Heart left ventricle (tissue), 16 donors: ENCODE measurements at regions of chr1 and their contacts with region 1.

Region 1: GRCh38 chr1:176187001-176187400 is 20.1 kb downstream of the COP1 start:
- DNase-seq: no peak
- ATAC-seq: no peak
- H3K4me3 ChIP-seq: no peak overlapping the region
- H3K27ac ChIP-seq: no peak overlapping the region
- H3K4me1 ChIP-seq: peaks cover 0 to 45% (median 0%) of the 10 kb centered on the region in 12 donors
- H3K27me3 ChIP-seq: no peaks in the 10 kb centered on the region
- CTCF ChIP-seq: no peak
- POLR2A ChIP-seq: no peak

Region 2: DNA sequence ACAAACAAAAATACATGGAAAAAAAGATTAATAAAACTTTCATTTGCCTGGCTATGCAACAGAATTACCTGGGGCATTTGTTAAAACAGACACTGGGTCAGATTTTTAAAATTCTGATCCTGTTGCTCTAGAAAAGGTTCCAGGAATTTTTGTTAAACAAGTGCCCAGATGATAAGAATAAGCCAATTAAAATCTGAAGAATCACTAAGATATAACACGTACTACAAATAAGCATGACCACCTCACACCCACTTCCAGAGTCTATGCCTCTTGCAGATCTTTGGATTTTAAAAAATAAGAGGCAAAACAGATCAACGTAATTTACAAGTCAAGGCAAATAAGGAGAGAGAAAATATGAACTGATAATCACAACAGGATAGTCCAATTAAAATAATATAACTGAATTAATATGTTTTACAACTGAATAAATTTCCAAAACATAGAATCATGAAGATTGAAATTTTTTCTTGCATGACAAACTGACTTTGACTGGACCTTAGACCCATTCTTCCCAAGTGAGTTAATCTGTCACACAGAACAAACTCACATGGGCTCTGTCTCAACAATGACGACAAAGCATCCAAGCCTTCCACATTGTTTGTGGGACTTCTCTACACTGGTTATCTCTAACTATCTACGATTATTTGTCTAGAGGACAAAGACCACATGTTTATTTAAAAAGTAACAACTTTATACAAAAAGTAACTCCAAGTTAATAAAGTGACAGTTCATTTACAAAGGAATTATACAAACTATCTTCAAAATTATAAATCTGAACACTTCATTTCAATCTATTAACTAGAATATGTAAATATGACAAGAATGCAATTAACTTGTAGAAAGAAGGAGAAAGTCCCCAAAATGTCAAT is 36.8 kb before region 1 on chr1:
- intact Hi-C with region 1: loop called in 1 of 10 experiments (anchors 5 kb)
- DNase-seq: no peak
- ATAC-seq: no peak
- H3K4me3 ChIP-seq: no peak overlapping the region
- H3K27ac ChIP-seq: no peak overlapping the region
- H3K4me1 ChIP-seq: peaks cover 0 to 16% (median 1%) of the 10 kb centered on the region in 12 donors
- H3K27me3 ChIP-seq: no peaks in the 10 kb centered on the region
- CTCF ChIP-seq: no peak
- POLR2A ChIP-seq: no peak

Region 3: GRCh38 chr1:176628775-176629174 is 441.8 kb after region 1 on chr1:
- intact Hi-C with region 1: no loop called
- DNase-seq: no peak
- ATAC-seq: no peak
- H3K4me3 ChIP-seq: no peak overlapping the region
- H3K27ac ChIP-seq: no peak overlapping the region
- H3K4me1 ChIP-seq: no peaks in the 10 kb centered on the region
- H3K27me3 ChIP-seq: no peaks in the 10 kb centered on the region
- CTCF ChIP-seq: no peak
- POLR2A ChIP-seq: no peak